ENCODE measurements at regions of chr17 and their contacts with region 1.

Region 1: DNA sequence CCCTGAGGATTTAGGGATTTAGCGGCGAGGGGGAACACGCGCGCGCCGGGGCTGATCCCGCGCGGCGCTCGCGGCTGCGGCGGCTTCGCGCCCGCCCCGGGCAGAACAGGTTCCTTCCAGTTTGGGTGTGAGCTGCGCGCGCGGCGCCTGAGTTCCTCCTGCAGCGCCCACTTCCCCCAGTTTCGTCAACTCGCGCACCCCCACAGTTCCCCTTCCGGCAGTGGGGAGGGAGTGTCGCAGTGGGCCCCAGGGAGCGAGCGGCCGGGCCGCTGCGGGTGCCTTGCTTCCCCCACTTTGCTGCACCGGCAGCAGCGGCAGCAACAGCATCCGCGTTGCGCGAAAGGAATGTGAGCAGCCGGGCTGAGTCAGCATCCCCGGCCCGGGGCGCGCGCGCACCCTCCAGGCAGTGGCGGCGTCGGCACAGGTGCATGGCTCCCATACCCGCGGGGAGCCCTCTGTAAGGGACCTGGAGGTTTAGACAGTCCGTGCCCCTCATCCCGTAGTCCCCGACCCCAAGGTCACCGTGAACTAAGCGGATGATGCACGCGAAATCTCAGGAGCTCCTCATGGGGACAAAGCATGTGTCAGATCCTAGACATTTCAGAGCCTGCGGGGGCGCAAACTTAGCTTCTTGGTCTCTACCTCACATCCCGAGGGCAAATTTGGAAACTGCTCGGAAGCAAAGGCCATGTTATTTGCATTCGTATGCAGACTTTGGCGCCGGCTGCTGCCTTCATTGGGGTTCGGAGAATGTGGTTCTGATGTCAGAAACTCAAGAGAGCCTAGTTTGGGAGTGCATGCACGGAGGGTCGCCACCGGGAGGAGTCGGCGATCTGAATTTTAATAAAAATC is 775 bp downstream of the ARSG start:
- DNase-seq: peak; percentile 92
- ATAC-seq: peak; percentile 71
- H3K4me3 Mint-ChIP-seq: peak overlapping the region; percentile 77
- H3K27ac Mint-ChIP-seq: peak overlapping the region; percentile 61
- H3K4me1 Mint-ChIP-seq: peaks cover 69% of the 10 kb centered on the region
- H3K27me3 Mint-ChIP-seq: no peaks in the 10 kb centered on the region

Region 2: DNA sequence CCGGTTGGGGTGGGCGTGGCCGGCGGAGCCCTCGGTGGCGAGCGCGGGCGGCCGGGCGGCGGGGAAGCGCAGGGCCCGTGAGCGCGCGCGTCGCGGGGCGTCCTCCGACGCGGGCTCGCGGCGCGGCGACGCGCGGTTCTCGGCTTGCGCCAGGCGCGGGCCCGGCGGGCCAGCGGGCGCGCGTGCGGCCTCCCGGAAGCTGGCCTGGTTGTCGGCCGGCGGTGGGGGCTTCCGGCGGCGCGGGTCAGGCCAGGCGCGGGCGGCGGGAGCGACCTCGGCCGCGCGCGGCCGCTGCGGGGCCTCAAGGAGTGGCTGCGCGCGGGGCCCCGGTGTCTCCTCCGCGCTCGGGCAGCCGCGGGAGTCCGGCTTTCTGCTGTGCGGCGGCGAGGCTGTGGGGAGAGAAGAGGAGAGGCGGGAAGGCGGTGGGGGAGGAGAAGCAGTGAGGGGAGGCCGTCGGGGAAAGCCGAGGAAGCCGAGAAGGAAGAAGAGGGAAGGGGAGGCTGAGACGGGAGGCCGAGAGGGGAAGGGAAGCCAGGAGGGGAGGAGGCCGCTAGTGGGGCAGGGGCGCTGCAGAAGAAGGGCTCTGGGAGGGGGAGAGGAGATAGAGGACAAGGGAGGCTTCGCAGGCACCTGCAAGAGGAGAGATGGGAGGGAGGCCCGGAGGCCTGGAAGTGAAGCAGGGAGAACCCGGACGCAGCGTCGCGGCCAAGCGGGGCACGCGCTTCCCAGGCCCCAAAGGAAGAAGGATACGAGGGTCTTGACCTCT is 298.3 kb before region 1 on chr17:
- CTCF ChIA-PET with region 1: no interaction called
- POLR2A ChIA-PET with region 1: no interaction called
- intact Hi-C with region 1: loop called in 1 of 2 experiments (anchors 1 kb)
- DNase-seq: peak; percentile 84
- ATAC-seq: peak; percentile 57
- H3K4me3 Mint-ChIP-seq: peak overlapping the region; percentile 75
- H3K27ac Mint-ChIP-seq: peak overlapping the region; percentile 84
- H3K4me1 Mint-ChIP-seq: peaks cover 26% of the 10 kb centered on the region
- H3K27me3 Mint-ChIP-seq: peaks cover 13% of the 10 kb centered on the region

Region 3: GRCh38 chr17:68205251-68205807 is 86.7 kb before region 1 on chr17:
- CTCF ChIA-PET with region 1: no interaction called
- POLR2A ChIA-PET with region 1: interaction called, 3 read pairs
- intact Hi-C with region 1: loop called in 1 of 2 experiments (anchors 1 kb)
- DNase-seq: peak; percentile 96
- ATAC-seq: peak; percentile 87
- H3K4me3 Mint-ChIP-seq: peak overlapping the region; percentile 93
- H3K27ac Mint-ChIP-seq: peak overlapping the region; percentile 78
- H3K4me1 Mint-ChIP-seq: peaks cover 27% of the 10 kb centered on the region
- H3K27me3 Mint-ChIP-seq: peaks cover 7% of the 10 kb centered on the region

Region 4: DNA sequence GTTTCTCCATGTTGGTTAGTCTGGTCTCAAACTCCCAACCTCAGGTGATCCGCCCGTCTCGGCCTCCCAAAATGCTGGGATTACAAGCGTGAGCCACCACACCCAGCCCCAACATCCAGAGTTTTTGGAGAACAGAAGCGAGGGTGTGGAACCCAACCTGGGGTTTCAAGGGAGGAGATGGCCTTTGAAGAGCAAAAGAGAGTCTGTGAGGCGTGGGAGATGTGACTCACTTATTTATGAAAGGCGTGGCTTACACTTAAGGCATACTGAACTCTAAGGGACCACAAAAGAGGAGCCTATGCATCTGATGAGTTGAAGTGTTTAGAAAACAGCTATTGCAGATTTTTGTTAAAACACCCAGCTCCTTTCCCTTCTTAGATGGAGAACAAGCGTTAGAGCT is 18.1 kb after region 1 on chr17:
- CTCF ChIA-PET with region 1: interaction called, 4 read pairs
- POLR2A ChIA-PET with region 1: no interaction called
- intact Hi-C with region 1: loop called in 1 of 2 experiments (anchors 1 kb)
- DNase-seq: peak; percentile 73
- ATAC-seq: peak; percentile 96
- H3K4me3 Mint-ChIP-seq: no peak overlapping the region
- H3K27ac Mint-ChIP-seq: no peak overlapping the region
- H3K4me1 Mint-ChIP-seq: peaks cover 55% of the 10 kb centered on the region
- H3K27me3 Mint-ChIP-seq: no peaks in the 10 kb centered on the region

Region 5: DNA sequence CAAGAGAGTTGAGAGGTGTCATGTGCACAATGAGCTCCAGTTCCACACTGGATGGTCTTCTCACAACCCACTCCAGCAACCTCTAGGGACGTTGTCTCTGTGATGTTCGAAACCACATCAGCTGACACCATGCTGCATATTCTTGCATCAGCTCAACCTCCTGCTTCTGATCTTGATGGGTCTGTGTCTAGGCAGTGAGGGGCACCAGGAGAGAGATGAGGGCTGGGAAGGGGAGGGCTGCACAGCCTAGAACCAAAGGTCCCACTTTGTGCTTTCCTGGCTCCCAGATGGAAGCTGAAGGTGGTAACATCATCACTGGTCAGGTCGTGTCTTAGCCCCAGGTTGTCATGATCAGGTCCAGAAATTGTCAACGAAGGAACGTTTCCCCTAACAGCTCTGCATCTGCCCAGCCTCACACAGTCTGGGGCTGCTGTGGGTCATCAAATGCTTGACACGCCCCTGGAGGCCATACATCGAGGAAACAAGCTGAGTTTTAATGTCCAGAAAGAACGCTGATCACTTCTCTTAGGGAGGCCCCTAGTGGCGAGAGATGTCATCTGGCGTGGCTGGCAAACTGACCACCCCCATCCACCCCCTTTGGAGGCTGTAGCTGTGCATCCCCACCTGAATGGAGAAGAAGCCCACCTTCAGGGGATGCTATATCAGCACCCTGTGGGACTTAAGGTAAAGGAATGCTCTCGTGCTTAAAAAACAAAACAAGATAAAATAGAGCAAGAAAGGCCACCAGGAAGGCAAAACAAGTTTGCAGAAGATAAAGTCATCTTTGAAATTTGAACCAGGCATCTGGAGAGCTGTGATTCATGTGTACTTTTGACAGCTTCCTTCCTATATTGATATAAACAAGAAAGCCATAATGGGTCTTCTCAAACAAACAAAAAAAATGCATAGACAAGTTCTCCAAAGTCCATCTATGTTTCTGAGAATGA is 106.9 kb after region 1 on chr17:
- CTCF ChIA-PET with region 1: interaction called, 6 read pairs
- POLR2A ChIA-PET with region 1: interaction called, 3 read pairs
- intact Hi-C with region 1: loop called (anchors 1 to 2 kb)
- DNase-seq: peak; percentile 59
- ATAC-seq: peak; percentile 35
- H3K4me3 Mint-ChIP-seq: peak overlapping the region; percentile 18
- H3K27ac Mint-ChIP-seq: peak overlapping the region; percentile 82
- H3K4me1 Mint-ChIP-seq: peaks cover 34% of the 10 kb centered on the region
- H3K27me3 Mint-ChIP-seq: no peaks in the 10 kb centered on the region

Region 6: GRCh38 chr17:69327060-69327831 is 1035.2 kb after region 1 on chr17 and contains the start of gene ABCA5:
- CTCF ChIA-PET with region 1: no interaction called
- POLR2A ChIA-PET with region 1: no interaction called
- intact Hi-C with region 1: loop called in 1 of 2 experiments (anchors 1 kb)
- DNase-seq: peak; percentile 92
- ATAC-seq: peak; percentile 98
- H3K4me3 Mint-ChIP-seq: peak within 1 kb of the TSS; percentile 95
- H3K27ac Mint-ChIP-seq: peak within 1 kb of the TSS; percentile 97
- H3K4me1 Mint-ChIP-seq: peaks cover 43% of the 10 kb centered on the region
- H3K27me3 Mint-ChIP-seq: peaks cover 2% of the 10 kb centered on the region
- total RNA-seq, gene ABCA5: 14.4 to 15.1 TPM

Measured in activated CD4-positive, alpha-beta T cell treated with anti-CD3 and anti-CD28 coated beads for 36 hours (primary cell).